ENCODE measurements at regions of chr1 and their contacts with region 1.

Region 1: DNA sequence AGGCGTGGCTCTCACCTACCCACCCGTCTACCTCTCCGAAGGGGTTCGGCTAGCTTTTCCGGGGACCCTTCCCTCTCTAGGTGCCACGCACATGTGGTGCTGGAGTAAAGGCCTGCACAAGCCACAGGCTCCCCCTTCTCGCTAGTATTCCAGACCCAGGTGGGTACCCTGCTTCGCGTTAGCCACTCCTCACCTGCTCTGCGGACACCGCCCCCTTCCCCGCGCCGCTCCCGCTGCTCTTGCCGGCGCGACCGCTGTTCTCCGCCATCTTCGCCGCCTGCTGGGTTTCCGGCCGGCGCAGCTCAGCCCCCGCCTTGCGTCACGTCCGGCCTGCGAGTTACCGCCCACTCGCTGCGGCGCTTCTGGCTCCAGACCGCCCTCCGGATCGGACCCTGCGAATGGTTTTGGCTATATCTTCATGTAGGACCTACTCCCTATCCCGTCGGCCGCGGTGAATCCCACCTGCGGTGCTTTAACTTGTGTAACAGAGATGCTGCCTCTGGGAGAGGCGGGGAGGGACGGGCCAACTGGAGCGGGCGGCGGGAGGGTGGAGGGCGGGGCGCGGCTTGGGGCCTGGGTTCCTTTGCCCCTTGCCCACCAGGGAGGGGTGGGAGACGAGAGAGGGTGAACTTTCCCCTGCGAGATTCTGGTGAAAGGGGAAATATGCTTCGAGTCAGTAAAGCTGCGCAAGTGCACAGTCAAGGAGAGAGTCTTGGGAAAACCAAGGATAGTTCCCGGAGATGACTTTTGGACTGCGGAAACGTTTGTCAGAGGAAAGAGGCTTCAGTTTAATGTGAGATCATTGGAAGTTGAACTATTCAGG is at the starts of genes NIT1 and PFDN2:
- DNase-seq: peak; percentile 84
- H3K4me3 Mint-ChIP-seq: peak within 1 kb of the TSS; percentile 97
- H3K27ac Mint-ChIP-seq: peak within 1 kb of the TSS; percentile 96
- H3K4me1 Mint-ChIP-seq: peaks cover 75% of the 10 kb centered on the region
- H3K27me3 Mint-ChIP-seq: no peaks in the 10 kb centered on the region
- total RNA-seq, gene NIT1: 51.3 and 56.3 TPM in 2 replicates
- total RNA-seq, gene PFDN2: 147 and 164 TPM in 2 replicates

Region 2: DNA sequence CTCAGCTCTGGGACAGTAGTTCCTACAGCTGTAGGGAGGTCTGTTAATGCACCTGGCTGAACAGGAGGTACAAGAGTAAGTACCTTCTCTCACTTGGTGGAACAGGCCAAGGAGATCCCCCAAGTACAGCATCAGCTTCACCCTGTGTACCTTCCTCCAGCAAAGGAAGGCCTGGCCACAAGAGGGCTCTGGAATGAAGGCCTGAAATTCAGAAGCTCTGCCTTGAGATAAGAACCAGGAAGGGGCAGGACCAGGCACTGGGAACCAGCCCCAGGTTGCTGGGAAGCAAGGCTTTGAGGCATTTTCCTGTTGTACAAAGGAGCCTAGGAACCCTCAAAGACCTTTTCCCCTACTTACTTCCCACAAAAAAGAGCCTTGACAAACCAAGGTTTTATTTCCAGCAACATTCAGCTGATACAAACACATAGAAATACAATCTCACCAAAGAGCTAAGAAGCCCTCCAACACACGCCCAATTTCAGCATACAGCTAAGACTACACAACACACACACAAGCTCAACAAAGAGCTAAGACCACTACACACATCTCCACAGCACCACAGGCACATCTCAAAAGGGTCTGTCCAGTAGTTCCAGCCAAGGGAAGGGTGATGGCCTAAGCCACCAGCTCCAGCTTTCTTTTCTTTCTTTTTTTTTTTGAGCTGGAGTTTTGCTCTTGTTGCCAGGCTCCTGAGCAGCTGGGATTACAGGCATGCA is 120.5 kb before region 1 on chr1:
- intact Hi-C with region 1: loop called (anchors 5 kb)
- DNase-seq: peak; percentile 41
- H3K4me3 Mint-ChIP-seq: no peak overlapping the region
- H3K27ac Mint-ChIP-seq: peak overlapping the region; percentile 47
- H3K4me1 Mint-ChIP-seq: peaks cover 33% of the 10 kb centered on the region
- H3K27me3 Mint-ChIP-seq: no peaks in the 10 kb centered on the region

Region 3: GRCh38 chr1:161045750-161046571 is 72.0 kb before region 1 on chr1 and contains the start of gene USF1:
- intact Hi-C with region 1: loop called (anchors 1 kb)
- DNase-seq: peak; percentile 92
- H3K4me3 Mint-ChIP-seq: peak within 1 kb of the TSS; percentile 94
- H3K27ac Mint-ChIP-seq: peak within 1 kb of the TSS; percentile 97
- H3K4me1 Mint-ChIP-seq: peaks cover 55% of the 10 kb centered on the region
- H3K27me3 Mint-ChIP-seq: no peaks in the 10 kb centered on the region
- total RNA-seq, gene USF1: 50.6 and 51.5 TPM in 2 replicates

Region 4: DNA sequence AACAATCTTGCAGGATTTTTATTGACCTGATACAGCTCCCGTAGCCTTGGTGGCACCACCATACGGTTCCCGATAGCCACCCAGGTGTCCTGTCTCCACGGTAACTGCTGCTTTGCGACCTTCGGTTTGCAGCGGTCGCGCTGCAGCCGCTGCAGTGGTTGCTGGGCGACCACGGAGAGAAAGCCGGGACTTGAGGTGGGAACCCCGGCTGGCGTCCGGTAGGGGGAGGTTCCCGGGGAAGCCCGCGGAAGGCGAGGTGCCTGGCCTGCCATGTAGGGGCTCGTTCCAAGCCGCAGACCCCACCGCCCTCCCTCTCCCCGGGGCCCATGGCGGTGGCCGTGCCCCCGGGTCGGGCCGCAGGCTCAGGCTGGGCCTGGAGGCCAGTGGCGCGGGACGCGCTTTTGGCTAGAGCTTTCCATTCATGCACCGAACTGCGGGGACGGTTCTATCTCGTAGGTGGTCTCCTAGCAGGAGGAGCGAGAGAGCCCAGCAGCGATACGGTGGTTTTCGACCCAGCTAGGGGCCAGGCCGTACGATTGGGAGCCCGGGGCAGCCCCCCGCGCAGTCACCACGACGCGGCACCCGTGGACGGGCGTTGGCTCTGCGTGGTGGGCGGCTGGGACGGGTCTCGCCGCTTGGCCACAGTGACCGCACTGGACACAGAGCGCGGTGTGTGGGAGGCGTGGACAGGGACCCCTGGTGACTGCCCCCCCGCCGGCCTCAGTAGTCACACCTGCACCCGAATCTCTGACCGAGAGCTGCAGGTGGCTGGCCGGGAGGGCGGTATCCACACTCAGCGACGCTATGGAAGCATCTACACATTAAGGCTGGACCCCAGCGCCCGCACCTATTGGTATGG is 19.5 kb before region 1 on chr1 and contains the start of gene KLHDC9:
- intact Hi-C with region 1: loop called (anchors 1 kb)
- DNase-seq: peak; percentile 68
- H3K4me3 Mint-ChIP-seq: peak within 1 kb of the TSS; percentile 80
- H3K27ac Mint-ChIP-seq: peak within 1 kb of the TSS; percentile 96
- H3K4me1 Mint-ChIP-seq: peaks cover 39% of the 10 kb centered on the region
- H3K27me3 Mint-ChIP-seq: peaks cover 2% of the 10 kb centered on the region
- total RNA-seq, gene KLHDC9: not detected in 2 replicates

Region 5: GRCh38 chr1:161145832-161146231 is 27.9 kb after region 1 on chr1:
- intact Hi-C with region 1: no loop called
- DNase-seq: no peak
- H3K4me3 Mint-ChIP-seq: no peak overlapping the region
- H3K27ac Mint-ChIP-seq: no peak overlapping the region
- H3K4me1 Mint-ChIP-seq: no peaks in the 10 kb centered on the region
- H3K27me3 Mint-ChIP-seq: no peaks in the 10 kb centered on the region

Region 6: DNA sequence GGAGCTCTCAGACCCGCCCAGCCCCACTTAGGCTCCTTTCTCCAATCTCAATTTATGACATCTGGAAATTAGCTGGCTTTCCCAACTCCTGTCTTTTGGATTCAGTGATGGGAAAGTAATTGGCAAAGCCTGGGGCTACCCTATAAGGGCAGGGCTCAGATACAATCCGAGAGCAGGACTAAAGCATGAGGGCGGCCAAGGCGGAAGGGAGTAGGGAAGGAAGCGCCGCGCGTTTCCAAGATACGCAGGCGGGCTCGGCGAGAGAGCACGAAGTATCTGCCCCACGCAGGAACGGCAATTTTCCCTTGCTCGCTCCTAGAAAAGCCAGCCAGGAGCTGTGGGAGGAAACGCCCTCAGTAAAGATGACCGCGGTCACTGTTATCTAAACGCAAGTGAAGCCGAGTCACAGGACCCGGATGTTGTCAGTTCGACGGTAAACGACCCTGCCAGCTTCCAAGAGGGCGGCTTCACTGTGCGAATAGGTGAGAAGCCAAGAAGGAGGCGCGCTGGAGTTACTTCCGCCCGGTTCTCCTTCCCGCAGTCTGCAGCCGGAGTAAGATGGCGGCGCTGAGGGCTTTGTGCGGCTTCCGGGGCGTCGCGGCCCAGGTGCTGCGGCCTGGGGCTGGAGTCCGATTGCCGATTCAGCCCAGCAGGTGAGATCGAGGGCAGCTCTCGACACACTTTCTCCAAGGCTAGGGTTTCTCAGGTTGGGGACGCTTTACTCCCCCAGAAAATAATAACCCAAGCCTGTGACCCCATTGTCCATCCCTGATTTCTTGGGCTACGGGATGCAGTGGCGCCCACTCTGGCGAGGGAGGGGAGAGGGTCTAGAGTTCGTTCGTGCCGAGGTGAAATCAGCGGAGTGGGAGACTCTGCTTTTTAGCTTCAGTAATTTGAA is 84.1 kb after region 1 on chr1 and contains the start of gene NDUFS2:
- intact Hi-C with region 1: loop called (anchors 2 kb)
- DNase-seq: peak; percentile 93
- H3K4me3 Mint-ChIP-seq: peak within 1 kb of the TSS; percentile 96
- H3K27ac Mint-ChIP-seq: peak within 1 kb of the TSS; percentile 97
- H3K4me1 Mint-ChIP-seq: peaks cover 77% of the 10 kb centered on the region
- H3K27me3 Mint-ChIP-seq: no peaks in the 10 kb centered on the region
- total RNA-seq, gene NDUFS2: 72.9 and 84.1 TPM in 2 replicates

Region 7: GRCh38 chr1:161216945-161217712 is 99.2 kb after region 1 on chr1:
- intact Hi-C with region 1: no loop called
- DNase-seq: no peak
- H3K4me3 Mint-ChIP-seq: no peak overlapping the region
- H3K27ac Mint-ChIP-seq: no peak overlapping the region
- H3K4me1 Mint-ChIP-seq: peaks cover 41% of the 10 kb centered on the region
- H3K27me3 Mint-ChIP-seq: no peaks in the 10 kb centered on the region

Region 8: GRCh38 chr1:161691846-161692245 is 573.9 kb after region 1 on chr1:
- intact Hi-C with region 1: no loop called
- DNase-seq: no peak
- H3K4me3 Mint-ChIP-seq: no peak overlapping the region
- H3K27ac Mint-ChIP-seq: no peak overlapping the region
- H3K4me1 Mint-ChIP-seq: no peaks in the 10 kb centered on the region
- H3K27me3 Mint-ChIP-seq: peaks cover 28% of the 10 kb centered on the region